Activated CD4-positive, alpha-beta T cell treated with anti-CD3 and anti-CD28 coated beads, Interleukin-2, amount 10 ng/mL, durations not matched to agents 7 days and 5 days (primary cell): ENCODE measurements at regions of chr19 and their contacts with region 1.

Region 1: GRCh38 chr19:35921012-35921411 is 12.9 kb upstream of the TYROBP start:
- DNase-seq: no peak
- H3K4me3 Mint-ChIP-seq: no peak overlapping the region
- H3K27ac Mint-ChIP-seq: no peak overlapping the region
- H3K4me1 Mint-ChIP-seq: no peaks in the 10 kb centered on the region
- H3K27me3 Mint-ChIP-seq: peaks cover 12% of the 10 kb centered on the region

Region 2: GRCh38 chr19:35856546-35857149 is 64.4 kb before region 1 on chr19 and contains the start of gene KIRREL2:
- CTCF ChIA-PET with region 1: no interaction called
- POLR2A ChIA-PET with region 1: no interaction called
- DNase-seq: peak; percentile 29
- H3K4me3 Mint-ChIP-seq: peak within 1 kb of the TSS; percentile 65
- H3K27ac Mint-ChIP-seq: peak within 1 kb of the TSS; percentile 41
- H3K4me1 Mint-ChIP-seq: peaks cover 10% of the 10 kb centered on the region
- H3K27me3 Mint-ChIP-seq: peaks cover 63% of the 10 kb centered on the region
- total RNA-seq, gene KIRREL2: 0.19 to 0.25 TPM

Region 3: DNA sequence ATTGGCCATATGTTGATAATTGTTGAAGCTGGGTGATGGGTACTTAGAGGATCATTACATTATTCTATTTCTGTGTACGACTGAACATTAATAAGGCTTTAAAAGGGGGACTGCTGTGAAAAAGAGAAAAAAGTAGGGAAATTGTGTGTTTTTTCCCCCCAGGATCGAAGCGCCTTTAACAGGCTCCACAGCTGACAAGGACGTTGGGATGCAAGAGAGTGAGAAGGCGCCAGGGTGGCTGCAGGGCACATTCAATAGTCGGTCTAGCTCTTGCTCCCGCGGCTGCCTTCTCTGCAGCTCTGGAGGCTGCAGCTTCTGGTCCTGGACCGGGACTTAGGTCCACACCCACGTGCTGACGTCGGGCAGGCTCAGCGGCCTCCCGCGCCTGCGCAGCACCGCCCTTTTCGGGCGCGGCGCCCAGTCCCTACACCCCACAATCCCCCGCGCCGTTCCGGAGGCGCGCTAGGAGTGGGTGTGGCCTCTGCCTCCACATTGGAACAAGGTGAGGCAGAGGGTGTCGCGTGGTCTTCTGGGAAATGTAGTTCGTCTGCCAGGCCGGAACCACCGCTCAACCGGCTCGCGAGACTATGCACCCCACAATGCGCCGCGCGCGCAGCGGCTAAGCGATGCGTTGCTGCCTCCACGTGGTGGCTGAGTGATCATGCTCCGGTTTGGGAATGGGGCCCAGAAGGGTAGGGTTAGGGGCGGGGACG is 10.3 kb after region 1 on chr19:
- CTCF ChIA-PET with region 1: interaction called, 12 read pairs
- POLR2A ChIA-PET with region 1: no interaction called
- DNase-seq: peak; percentile 100
- H3K4me3 Mint-ChIP-seq: peak overlapping the region; percentile 70
- H3K27ac Mint-ChIP-seq: peak overlapping the region; percentile 93
- H3K4me1 Mint-ChIP-seq: peaks cover 46% of the 10 kb centered on the region
- H3K27me3 Mint-ChIP-seq: no peaks in the 10 kb centered on the region

Region 4: DNA sequence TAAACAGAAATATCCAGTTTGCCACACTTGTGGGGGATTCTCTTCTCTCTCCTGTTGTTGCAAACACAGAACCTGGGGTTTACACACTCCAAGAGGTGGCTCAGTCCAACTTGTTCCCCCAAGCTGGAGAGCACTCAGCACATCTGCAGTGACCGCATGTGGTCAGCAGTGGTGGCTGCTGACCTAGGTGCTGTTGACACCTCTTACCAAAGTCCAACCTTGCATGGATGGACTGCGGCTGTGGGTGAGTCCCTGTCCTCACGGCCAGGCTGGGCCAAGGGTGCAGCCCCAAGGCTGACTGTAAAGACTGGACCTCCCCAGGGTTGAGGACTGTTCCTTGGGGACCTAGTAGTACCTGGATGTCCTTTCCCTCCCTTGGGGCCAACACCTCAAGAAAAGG is 21.2 kb after region 1 on chr19:
- CTCF ChIA-PET with region 1: no interaction called
- POLR2A ChIA-PET with region 1: no interaction called
- DNase-seq: no peak
- H3K4me3 Mint-ChIP-seq: no peak overlapping the region
- H3K27ac Mint-ChIP-seq: no peak overlapping the region
- H3K4me1 Mint-ChIP-seq: peaks cover 28% of the 10 kb centered on the region
- H3K27me3 Mint-ChIP-seq: no peaks in the 10 kb centered on the region